Activated T-helper 2 cell treated with anti-CD3 and anti-CD28 coated beads, Interferon-gamma antibody, Interleukin-2, Interleukin-4, amounts not matched to agents 10 μg/mL and 5 μg/mL and 100 μg/mL, durations not matched to agents 14 hours and 24 hours and 36 hours (primary cell): ENCODE measurements at regions of chr9 and their contacts with region 1.

Region 1: GRCh38 chr9:105299190-105299854 is 54.9 kb downstream of the SLC44A1 start:
- DNase-seq: no peak
- H3K4me3 Mint-ChIP-seq: no peak overlapping the region
- H3K27ac Mint-ChIP-seq: peak overlapping the region; percentile 35
- H3K4me1 Mint-ChIP-seq: peaks cover 34% of the 10 kb centered on the region
- H3K27me3 Mint-ChIP-seq: peaks cover 22% of the 10 kb centered on the region

Region 2: GRCh38 chr9:105127863-105128220 is 171.5 kb before region 1 on chr9:
- intact Hi-C with region 1: loop called (anchors 1 kb)
- DNase-seq: peak; percentile 65
- H3K4me3 Mint-ChIP-seq: no peak overlapping the region
- H3K27ac Mint-ChIP-seq: no peak overlapping the region
- H3K4me1 Mint-ChIP-seq: peaks cover 25% of the 10 kb centered on the region
- H3K27me3 Mint-ChIP-seq: peaks cover 33% of the 10 kb centered on the region

Region 3: DNA sequence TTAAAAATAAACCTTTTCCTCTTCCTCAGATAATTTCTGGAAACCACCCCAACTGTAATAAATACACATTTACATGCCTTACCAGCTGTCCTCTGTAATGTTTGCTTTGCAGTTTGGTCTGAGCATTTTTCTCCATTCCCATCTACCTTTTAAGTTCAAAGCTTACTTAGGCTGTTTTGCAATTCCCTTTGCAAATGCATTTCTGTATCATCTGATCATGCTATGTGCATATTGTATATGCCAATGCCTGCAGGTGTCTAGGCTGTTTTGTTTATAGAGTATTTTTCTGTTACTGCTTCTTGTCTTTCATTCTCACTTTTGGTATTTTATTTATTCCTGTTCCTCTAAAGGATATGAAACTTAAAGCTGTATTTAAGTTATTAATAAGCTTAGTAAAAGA is 31.4 kb after region 1 on chr9:
- intact Hi-C with region 1: loop called (anchors 5 kb)
- DNase-seq: no peak
- H3K4me3 Mint-ChIP-seq: no peak overlapping the region
- H3K27ac Mint-ChIP-seq: no peak overlapping the region
- H3K4me1 Mint-ChIP-seq: peaks cover 5% of the 10 kb centered on the region
- H3K27me3 Mint-ChIP-seq: peaks cover 6% of the 10 kb centered on the region

Region 4: DNA sequence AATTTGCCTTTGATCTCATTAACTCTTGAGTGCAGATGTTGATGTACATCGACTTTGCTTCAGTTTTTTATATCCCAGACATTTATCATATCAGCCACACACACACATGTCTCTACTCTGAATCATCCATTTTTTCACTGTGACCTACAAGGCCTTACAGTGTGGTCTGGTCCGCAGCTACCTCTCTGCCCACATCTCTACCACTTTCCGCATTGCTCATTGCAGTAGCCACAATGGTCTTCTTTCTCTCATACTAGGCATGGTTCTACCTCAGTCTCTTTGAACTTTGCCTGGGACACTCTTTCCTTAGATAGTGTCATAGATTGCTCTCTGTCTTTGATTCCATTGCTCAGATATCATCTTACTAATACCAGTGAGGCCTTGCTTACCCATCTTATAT is 60.6 kb after region 1 on chr9:
- intact Hi-C with region 1: loop called (anchors 1 kb)
- DNase-seq: peak; percentile 18
- H3K4me3 Mint-ChIP-seq: no peak overlapping the region
- H3K27ac Mint-ChIP-seq: no peak overlapping the region
- H3K4me1 Mint-ChIP-seq: peaks cover 25% of the 10 kb centered on the region
- H3K27me3 Mint-ChIP-seq: peaks cover 35% of the 10 kb centered on the region